PC-3 (cell line): ENCODE measurements at regions of chr12 and their contacts with region 1.

Region 1: GRCh38 chr12:115423546-115423987 is 739.6 kb upstream of the TBX3 start:
- DNase-seq: peak; percentile 23
- ATAC-seq: peak; percentile 62
- H3K4me3 ChIP-seq: no peak overlapping the region
- H3K27ac ChIP-seq: no peak overlapping the region
- H3K4me1 ChIP-seq: peaks cover 6% of the 10 kb centered on the region
- H3K27me3 ChIP-seq: no peaks in the 10 kb centered on the region
- CTCF ChIP-seq: no peak

Region 2: DNA sequence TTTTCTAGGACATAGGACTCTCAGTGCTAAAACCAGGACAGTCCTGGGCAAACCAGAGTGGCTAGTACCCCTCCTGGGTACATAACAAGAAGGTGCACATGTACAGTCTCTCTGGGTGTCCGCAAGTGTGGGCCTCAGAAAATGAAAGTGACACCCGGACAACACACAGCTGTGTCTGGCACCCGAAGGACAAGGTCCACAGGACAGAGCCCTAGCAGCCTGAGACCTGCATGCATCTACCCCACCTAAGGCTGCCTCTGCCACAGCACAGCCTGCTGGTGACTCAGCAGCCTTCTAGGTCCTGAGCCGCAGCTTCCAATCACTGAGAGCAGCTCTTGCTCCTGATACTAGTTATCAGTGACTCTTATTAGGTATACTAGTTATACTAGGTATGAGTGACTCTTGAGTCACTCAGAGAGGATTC is 44.5 kb after region 1 on chr12:
- CTCF ChIA-PET with region 1: no interaction called
- POLR2A ChIA-PET with region 1: no interaction called
- intact Hi-C with region 1: no loop called
- DNase-seq: peak; percentile 80
- ATAC-seq: peak; percentile 92
- H3K4me3 ChIP-seq: no peak overlapping the region
- H3K27ac ChIP-seq: no peak overlapping the region
- H3K4me1 ChIP-seq: peaks cover 14% of the 10 kb centered on the region
- H3K27me3 ChIP-seq: peaks cover 7% of the 10 kb centered on the region; the same call in 1 of the 2 replicates
- CTCF ChIP-seq: no peak

Region 3: GRCh38 chr12:115840159-115840558 is 416.6 kb after region 1 on chr12:
- CTCF ChIA-PET with region 1: no interaction called
- POLR2A ChIA-PET with region 1: no interaction called
- intact Hi-C with region 1: loop called (anchors 5 kb)
- DNase-seq: peak; percentile 73
- ATAC-seq: peak; percentile 94
- H3K4me3 ChIP-seq: no peak overlapping the region
- H3K27ac ChIP-seq: no peak overlapping the region
- H3K4me1 ChIP-seq: no peaks in the 10 kb centered on the region; the same call in 1 of the 2 replicates
- H3K27me3 ChIP-seq: peaks cover 11% of the 10 kb centered on the region; the same call in 1 of the 2 replicates
- CTCF ChIP-seq: no peak